Activated CD4-positive, alpha-beta memory T cell treated with anti-CD3 and anti-CD28 coated beads for 36 hours (primary cell): ENCODE measurements at regions of chr19 and their contacts with region 1.

Region 1: GRCh38 chr19:12945479-12946091 is at the start of gene RAD23A:
- DNase-seq: peak; percentile 99
- H3K4me3 Mint-ChIP-seq: peak within 1 kb of the TSS; percentile 85
- H3K27ac Mint-ChIP-seq: peak within 1 kb of the TSS; percentile 98
- H3K4me1 Mint-ChIP-seq: peaks cover 51% of the 10 kb centered on the region
- H3K27me3 Mint-ChIP-seq: peaks cover 1% of the 10 kb centered on the region
- total RNA-seq, gene RAD23A: 190 to 194 TPM

Region 2: DNA sequence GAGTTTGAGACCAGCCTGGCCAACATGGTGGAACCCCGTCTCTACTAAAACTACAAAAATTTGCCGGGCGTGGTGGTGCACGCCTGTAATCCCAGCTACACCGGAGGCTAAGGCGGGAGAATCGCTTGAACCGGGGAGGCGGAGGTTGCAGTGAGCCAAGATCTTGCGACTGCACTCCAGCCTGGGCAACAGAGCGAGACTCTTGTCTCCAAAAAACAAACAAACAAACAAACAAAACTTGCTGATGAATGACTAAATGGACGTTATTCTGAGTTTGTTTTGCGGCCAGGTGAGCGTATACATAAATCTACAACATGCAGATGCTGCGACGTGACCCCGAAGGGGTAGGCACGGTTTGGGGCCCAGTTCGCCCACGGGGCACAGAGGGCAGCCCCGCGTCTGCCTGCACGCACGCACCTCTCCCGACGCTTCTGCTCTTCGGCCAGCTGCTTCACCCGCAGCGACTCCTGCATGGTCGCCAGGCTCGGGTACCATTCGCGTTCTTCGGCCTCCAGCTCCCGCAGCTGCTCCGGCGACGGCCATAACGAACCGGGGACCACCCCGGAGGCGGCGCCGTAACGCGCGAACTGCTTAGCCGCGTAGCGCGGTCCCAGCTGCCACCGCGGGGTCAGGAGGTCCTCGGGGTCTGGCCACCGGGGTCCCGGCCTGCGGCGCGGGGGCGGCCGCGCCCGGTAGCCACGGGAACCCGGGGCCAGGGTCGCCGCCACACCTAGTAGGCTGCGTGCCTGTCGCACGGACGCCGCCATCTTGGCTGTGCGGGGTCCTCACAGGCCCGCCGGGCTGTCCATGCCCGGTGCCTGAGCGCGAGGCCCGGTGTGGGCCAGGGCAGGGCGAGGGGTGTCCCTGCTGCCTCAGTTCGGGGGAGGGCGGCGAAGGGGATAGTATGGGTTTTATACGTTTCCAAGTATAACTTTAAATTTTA is 11.1 kb after region 1 on chr19 and contains the start of gene GADD45GIP1:
- CTCF ChIA-PET with region 1: no interaction called
- POLR2A ChIA-PET with region 1: interaction called, 17 read pairs
- intact Hi-C with region 1: no loop called
- DNase-seq: peak; percentile 90
- H3K4me3 Mint-ChIP-seq: peak within 1 kb of the TSS; percentile 88
- H3K27ac Mint-ChIP-seq: peak within 1 kb of the TSS; percentile 94
- H3K4me1 Mint-ChIP-seq: peaks cover 39% of the 10 kb centered on the region
- H3K27me3 Mint-ChIP-seq: no peaks in the 10 kb centered on the region
- total RNA-seq, gene GADD45GIP1: 31.2 to 32.6 TPM